ENCODE measurements at regions of chr2 and their contacts with region 1.

Region 1: DNA sequence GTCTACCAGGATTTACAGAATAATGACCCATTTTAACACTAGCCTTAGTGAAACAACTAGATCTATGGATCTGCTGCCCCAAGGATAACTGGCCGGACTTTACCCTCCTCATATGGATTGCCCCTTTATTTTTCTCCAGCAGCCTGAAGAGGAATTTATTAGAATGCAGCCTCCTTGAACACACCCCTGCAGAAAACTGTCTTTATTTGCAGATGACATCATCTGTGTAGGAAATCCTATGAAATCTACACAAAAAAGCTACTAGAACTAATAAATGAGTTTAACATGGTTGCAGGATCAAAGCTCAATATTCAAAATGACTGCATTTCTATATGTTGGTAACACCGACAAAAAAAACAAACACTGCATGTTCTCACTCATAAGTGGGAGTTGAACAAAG is 29.6 kb downstream of the LBH start:
- DNase-seq: no peak
- ATAC-seq: no peak
- H3K4me3 ChIP-seq: no peak overlapping the region
- H3K27ac ChIP-seq: no peak overlapping the region
- H3K4me1 ChIP-seq: no peaks in the 10 kb centered on the region
- H3K27me3 ChIP-seq: no peaks in the 10 kb centered on the region; the same call in 1 of the 2 replicates
- CTCF ChIP-seq: no peak

Region 2: DNA sequence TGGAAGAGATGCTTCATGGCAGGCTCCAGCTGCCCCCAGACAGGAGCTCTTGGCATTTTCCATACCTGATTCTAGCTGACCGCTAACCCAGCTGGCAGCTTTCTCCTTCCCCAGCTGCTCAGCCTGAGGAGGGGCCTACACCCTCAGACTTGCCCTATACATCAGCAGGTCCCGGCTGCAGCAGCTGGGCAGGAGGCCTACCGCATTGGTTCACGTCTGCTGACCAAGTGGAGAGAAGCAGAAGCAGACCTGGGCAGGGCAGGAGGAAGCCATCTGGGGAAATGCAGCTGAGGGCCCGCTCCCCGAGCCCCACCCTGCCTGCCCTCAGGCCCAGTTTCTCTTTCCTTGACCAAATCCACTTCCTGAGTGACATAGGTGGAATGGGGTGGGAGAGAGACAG is 21.1 kb after region 1 on chr2:
- CTCF ChIA-PET with region 1: no interaction called
- POLR2A ChIA-PET with region 1: no interaction called
- in situ Hi-C with region 1: no loop called
- intact Hi-C with region 1: no loop called
- DNase-seq: no peak
- ATAC-seq: no peak
- H3K4me3 ChIP-seq: no peak overlapping the region
- H3K27ac ChIP-seq: no peak overlapping the region
- H3K4me1 ChIP-seq: no peaks in the 10 kb centered on the region
- H3K27me3 ChIP-seq: no peaks in the 10 kb centered on the region
- CTCF ChIP-seq: no peak

Region 3: GRCh38 chr2:30421604-30422443 is 160.9 kb after region 1 on chr2:
- CTCF ChIA-PET with region 1: interaction called, 13 read pairs
- POLR2A ChIA-PET with region 1: no interaction called
- in situ Hi-C with region 1: no loop called
- intact Hi-C with region 1: no loop called
- DNase-seq: no peak
- ATAC-seq: 0 out of 2 replicates have a peak, but pooled peaks have one; percentile 30
- H3K4me3 ChIP-seq: no peak overlapping the region
- H3K27ac ChIP-seq: no peak overlapping the region
- H3K4me1 ChIP-seq: 0 out of 2 replicates have a peak, but pooled peaks cover 5% of the 10 kb centered on the region
- H3K27me3 ChIP-seq: no peaks in the 10 kb centered on the region
- CTCF ChIP-seq: no peak